ENCODE measurements at regions of chr20 and their contacts with region 1.

Region 1: DNA sequence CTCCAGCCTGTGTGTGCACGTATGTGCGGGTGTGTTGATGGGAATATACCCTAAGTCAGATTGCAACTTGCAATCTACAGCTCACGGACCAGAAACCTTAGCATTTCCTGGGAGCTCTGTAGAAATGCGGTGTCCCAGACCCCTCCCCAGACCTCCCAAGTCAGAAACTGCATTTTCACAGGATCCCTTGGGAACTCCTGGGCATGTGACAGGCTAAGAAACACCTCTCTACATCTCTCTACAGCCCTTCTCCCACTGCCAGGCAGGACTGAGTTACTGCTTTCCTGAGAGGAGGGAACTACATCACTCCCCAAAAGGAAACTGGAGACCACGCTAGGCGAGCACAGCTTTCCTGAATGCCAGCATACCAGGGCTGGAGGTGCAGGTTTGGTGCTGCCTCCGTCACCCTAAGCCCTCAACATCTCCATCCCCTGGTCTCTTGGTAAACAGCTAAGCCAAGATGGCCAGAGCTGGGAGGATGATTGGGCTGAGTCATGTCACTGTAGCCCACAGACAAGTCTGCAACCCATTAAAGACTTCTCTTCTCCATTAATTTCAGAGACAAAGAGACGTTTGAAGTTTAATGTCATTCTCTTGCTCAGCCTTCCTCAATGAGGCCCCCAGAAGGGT is 194.4 kb downstream of the BMP7 start:
- DNase-seq: no peak
- H3K27ac ChIP-seq: no peak overlapping the region
- CTCF ChIP-seq: no peak

Region 2: DNA sequence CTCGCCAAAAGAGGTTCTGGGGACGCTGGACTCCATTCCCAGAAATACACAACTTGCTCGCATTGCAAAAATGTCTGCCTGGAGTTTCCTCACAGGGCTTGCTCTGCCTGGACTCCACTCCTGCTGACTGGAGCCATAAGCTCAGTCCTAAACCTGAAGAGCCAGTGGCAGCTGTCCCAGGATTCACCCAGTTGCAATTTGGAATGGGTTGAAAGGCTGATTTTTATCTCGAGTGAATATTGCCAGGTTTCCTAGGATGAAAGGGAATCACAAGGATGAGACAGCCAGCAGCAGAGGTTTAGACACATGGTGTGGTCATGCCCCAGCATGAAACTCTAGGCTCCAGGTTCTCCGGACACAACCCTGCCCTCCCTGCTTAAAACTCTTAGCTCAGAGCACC is 29.0 kb before region 1 on chr20:
- CTCF ChIA-PET with region 1: no interaction called
- POLR2A ChIA-PET with region 1: no interaction called
- DNase-seq: peak; percentile 37
- H3K27ac ChIP-seq: peak overlapping the region; percentile 64
- CTCF ChIP-seq: no peak

Region 3: GRCh38 chr20:57514273-57514751 is 442.2 kb after region 1 on chr20:
- CTCF ChIA-PET with region 1: no interaction called
- POLR2A ChIA-PET with region 1: interaction called, 11 read pairs
- DNase-seq: peak; percentile 88
- H3K27ac ChIP-seq: no peak overlapping the region
- CTCF ChIP-seq: peak; percentile 91